ENCODE measurements at regions of chr2 and their contacts with region 1.

Region 1: DNA sequence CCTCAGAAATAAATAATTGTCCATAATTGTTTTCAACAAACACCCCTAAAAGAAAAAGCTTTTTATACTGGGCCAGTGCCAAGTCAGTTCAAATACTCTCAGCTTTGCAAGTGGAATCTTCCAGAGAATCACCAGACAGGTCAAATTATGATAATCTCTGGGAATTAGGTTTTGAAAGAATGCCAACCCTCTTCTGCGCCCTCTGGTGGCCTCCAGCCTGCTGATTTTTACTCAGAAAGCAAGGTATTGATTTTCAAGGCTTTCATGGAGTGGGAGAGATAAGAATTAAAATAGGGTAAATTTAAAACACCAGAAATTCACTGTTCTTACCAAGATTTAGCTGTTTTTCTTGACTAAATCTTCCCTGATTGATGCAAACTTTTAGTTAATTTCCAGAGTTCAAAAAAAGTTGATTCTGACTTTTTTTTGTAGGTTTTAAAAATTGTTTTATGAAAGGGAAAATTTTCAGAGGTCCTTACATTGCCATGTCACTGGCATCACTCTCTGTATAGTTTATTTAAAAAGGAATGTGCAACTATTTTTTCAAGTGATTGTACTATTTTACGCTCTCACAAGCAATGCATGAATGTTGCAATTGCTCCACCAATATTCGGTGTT is 282.9 kb upstream of the TNP1 start:
- DNase-seq: peak; percentile 46
- H3K4me3 ChIP-seq: no peak overlapping the region
- H3K27ac ChIP-seq: no peak overlapping the region
- H3K4me1 ChIP-seq: no peaks in the 10 kb centered on the region
- H3K27me3 ChIP-seq: peaks cover 3 to 7% of the 10 kb centered on the region in 2 experiments
- CTCF ChIP-seq: peak; percentile 66 to 73
- POLR2A ChIP-seq: no peak

Region 2: DNA sequence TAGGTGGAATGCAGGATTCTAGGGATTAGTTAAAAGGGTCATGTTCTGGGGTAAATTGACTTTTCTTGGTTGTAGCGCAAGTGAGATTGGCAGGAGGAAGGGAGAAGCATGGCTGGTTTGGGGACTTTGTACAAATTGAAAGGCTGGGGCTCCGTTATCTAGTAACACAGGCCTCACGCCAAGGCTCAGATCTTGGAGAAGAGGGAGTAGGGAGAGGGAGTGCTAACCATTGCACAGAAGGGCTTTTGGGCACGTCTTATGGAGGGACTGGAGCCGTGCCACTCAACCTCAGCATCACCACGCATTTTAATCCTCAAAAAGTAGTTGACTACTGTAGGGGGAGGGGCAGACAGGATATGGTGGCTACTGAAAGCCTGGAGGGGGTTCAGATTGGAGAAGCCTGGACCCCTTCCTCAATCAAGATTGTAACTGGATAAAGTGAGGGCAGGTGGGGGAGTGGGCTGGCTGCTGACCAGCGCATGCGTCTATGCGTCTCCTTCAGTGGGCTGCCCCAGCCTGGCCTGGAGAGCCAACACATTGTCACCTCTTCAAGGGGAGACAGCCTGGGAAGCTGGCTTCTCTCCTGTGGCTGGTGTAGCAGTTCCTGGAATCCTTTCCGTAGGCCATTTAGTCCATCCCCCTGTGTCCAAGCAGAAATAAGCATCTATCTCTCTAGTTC is 461.7 kb before region 1 on chr2:
- CTCF ChIA-PET with region 1: no interaction called
- POLR2A ChIA-PET with region 1: no interaction called
- dilution Hi-C with region 1: no loop called
- intact Hi-C with region 1: loop called (anchors 1 kb)
- DNase-seq: no peak
- H3K4me3 ChIP-seq: no peak overlapping the region
- H3K27ac ChIP-seq: no peak overlapping the region
- H3K4me1 ChIP-seq: no peaks in the 10 kb centered on the region
- H3K27me3 ChIP-seq: peaks cover 0 to 13% of the 10 kb centered on the region in 2 experiments
- CTCF ChIP-seq: no peak
- POLR2A ChIP-seq: no peak

Region 3: DNA sequence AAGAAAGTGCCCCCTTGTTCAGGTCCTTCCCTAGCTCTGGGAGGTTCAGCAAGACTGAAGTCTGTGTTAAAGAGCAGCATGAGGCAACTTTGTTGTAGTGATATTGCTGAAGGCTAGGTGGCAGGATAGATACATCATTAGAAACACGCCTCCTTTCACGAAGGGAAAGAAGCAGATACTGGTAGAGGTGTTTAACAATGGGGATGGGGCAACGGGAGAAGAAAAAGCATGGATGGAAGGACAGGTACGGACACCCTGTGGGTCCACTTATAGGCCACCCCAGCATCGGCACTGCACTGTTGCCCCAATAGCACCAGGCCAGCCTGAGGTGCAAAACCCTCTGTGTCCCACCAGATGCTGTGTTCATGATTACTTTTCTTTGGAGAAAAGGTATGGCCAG is 443.9 kb before region 1 on chr2:
- CTCF ChIA-PET with region 1: interaction called, 4 read pairs
- POLR2A ChIA-PET with region 1: no interaction called
- dilution Hi-C with region 1: no loop called
- intact Hi-C with region 1: loop called (anchors 1 kb)
- DNase-seq: peak; percentile 59
- H3K4me3 ChIP-seq: no peak overlapping the region
- H3K27ac ChIP-seq: no peak overlapping the region
- H3K4me1 ChIP-seq: peaks cover 3% of the 10 kb centered on the region
- H3K27me3 ChIP-seq: peaks cover 52 to 58% of the 10 kb centered on the region in 2 experiments
- CTCF ChIP-seq: peak; percentile 52
- POLR2A ChIP-seq: no peak

Region 4: DNA sequence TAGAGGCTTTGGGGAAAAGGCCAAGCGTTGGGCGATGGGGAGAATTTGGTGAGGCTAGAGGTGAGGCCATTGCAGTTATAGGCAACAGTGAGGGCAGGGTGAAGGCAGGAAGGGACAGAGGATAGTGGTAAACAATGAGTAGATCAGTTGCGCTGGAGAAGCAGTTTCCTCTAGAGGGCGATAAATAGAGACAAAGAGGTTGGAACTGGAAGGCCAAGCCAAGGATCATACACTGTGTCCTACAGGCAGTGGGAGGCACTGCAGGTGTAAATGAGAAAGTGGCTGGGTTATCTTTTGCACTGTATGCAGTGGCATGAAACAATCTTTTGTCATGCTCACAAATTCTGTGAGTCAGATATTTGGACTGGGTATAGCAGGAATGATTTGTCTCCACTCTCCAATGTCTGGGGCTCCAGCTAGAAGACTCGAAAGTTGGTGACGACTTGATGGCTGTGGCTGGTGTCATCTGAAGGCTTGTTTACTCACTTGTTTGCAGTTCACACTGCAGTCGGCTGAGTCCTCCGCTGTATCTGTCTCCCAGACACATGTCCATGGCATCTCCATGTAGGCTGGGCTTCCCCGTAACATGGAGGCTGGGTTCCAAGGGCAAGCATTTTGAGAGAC is 365.0 kb before region 1 on chr2:
- CTCF ChIA-PET with region 1: no interaction called
- POLR2A ChIA-PET with region 1: no interaction called
- dilution Hi-C with region 1: no loop called
- intact Hi-C with region 1: loop called (anchors 2 kb)
- DNase-seq: peak; percentile 33
- H3K4me3 ChIP-seq: no peak overlapping the region
- H3K27ac ChIP-seq: no peak overlapping the region
- H3K4me1 ChIP-seq: no peaks in the 10 kb centered on the region
- H3K27me3 ChIP-seq: no peaks in the 10 kb centered on the region
- CTCF ChIP-seq: peak; percentile 71 to 80
- POLR2A ChIP-seq: no peak

Region 5: GRCh38 chr2:217049956-217050355 is 92.8 kb before region 1 on chr2:
- CTCF ChIA-PET with region 1: no interaction called
- POLR2A ChIA-PET with region 1: no interaction called
- dilution Hi-C with region 1: no loop called
- intact Hi-C with region 1: loop called (anchors 2 kb)
- DNase-seq: no peak
- H3K4me3 ChIP-seq: no peak overlapping the region
- H3K27ac ChIP-seq: no peak overlapping the region
- H3K4me1 ChIP-seq: peaks cover 7% of the 10 kb centered on the region
- H3K27me3 ChIP-seq: no peaks in the 10 kb centered on the region
- CTCF ChIP-seq: no peak
- POLR2A ChIP-seq: no peak

Region 6: DNA sequence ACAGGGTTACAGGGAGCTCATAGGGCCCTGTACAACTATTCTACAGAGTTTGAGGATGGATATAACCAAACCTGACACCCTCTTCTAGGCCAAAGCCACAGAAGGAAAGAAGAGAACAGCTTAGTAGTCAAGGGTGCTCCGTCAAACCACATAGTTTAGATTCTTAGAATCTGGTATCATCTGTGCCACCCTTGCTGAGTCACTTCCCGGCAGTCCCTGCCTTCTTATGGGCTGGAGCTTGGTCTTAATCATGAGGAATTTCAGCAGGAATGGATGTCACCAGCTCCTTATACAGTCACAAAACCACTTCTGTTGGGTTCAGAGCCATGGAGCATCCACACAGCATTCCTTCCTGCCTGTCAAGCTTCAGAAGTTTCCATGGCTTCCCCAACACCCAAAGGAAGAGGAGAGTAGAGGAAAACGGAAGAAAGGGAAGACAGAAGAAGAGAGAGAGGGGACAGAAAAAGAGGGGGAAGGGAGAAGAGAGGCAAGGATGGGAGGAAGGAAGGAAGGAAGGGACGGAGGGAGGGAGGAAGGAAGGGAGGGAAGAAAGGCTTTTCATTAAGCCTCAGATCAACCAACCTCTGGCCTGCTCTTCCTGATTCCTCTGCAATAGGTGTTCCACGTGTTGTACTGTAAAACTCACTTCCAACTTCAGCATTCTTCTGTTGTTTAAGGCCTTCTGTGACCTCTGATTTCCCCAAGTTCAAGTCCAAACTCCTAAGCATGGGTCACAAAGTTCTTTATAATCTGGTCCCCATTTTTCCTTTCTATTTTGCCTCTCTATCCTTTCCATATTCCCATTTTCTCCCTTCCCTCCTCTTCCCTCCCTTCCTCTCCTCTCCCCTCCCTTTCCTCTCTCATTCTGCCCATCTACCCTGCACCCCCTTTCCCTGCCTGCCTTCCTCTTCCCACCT is 36.8 kb before region 1 on chr2:
- CTCF ChIA-PET with region 1: no interaction called
- POLR2A ChIA-PET with region 1: no interaction called
- dilution Hi-C with region 1: no loop called
- intact Hi-C with region 1: loop called (anchors 1 kb)
- DNase-seq: peak; percentile 54
- H3K4me3 ChIP-seq: no peak overlapping the region
- H3K27ac ChIP-seq: peak overlapping the region; percentile 42
- H3K4me1 ChIP-seq: peaks cover 20% of the 10 kb centered on the region
- H3K27me3 ChIP-seq: no peaks in the 10 kb centered on the region
- CTCF ChIP-seq: no peak
- POLR2A ChIP-seq: no peak